ENCODE measurements at regions of chr17 and their contacts with region 1.

Region 1: DNA sequence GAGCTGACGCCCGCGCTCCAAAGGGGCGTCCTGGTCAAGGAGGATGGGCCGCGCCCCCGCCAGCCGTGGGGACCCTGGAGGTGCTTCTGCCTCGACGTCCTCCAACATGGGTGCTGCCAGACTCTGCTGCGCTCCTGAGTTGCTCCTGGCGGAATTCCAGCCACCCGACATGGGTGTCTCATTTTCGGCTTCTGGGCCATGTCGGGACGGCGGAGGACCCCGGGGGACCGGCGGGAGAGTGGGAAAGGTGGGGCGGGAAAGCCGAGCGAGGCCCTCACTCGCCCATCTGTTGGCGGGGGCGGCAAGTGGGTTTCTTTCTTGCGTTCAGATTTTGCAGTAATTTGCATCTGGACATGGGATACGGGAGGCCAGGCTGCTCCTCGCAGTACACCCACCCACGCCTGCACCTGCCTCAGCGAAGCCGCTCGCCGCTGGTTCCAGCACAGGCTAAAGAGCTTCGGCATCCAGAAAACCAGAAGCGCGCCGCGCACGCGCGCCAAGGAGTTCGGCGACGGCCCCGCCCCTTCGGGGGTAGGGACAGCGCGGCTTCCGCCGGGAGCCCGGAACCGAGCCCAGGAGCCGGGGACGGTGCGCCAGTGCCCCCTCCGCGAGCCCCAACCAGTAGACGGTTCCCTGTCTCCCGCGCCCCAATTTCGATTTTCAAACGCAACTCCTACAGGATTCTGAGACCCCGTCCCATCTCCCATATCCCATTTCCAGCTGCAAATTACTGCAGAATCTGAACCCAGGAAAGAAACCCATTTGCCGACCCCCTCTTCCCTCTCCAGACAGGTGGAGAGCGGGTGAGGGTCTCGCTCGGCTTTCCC is at the start of gene ARMC7:
- DNase-seq: peak; percentile 69 to 92
- H3K4me3 ChIP-seq: peak within 1 kb of the TSS; percentile 59
- H3K27ac ChIP-seq: peak within 1 kb of the TSS; percentile 44; the same call in 1 of the 2 replicates
- H3K4me1 ChIP-seq: peaks cover 12% of the 10 kb centered on the region; the same call in 1 of the 2 replicates
- H3K27me3 ChIP-seq: no peaks in the 10 kb centered on the region
- CTCF ChIP-seq: no peak
- total RNA-seq, gene ARMC7: 19.2 and 20.5 TPM in 2 replicates

Region 2: GRCh38 chr17:75069783-75070182 is 39.8 kb before region 1 on chr17:
- CTCF ChIA-PET with region 1: interaction called, 5 read pairs
- POLR2A ChIA-PET with region 1: interaction called, 5 read pairs
- intact Hi-C with region 1: loop called (anchors 1 kb)
- DNase-seq: no peak
- H3K4me3 ChIP-seq: no peak overlapping the region
- H3K27ac ChIP-seq: no peak overlapping the region
- H3K4me1 ChIP-seq: no peaks in the 10 kb centered on the region
- H3K27me3 ChIP-seq: no peaks in the 10 kb centered on the region
- CTCF ChIP-seq: peak; percentile 65

Region 3: DNA sequence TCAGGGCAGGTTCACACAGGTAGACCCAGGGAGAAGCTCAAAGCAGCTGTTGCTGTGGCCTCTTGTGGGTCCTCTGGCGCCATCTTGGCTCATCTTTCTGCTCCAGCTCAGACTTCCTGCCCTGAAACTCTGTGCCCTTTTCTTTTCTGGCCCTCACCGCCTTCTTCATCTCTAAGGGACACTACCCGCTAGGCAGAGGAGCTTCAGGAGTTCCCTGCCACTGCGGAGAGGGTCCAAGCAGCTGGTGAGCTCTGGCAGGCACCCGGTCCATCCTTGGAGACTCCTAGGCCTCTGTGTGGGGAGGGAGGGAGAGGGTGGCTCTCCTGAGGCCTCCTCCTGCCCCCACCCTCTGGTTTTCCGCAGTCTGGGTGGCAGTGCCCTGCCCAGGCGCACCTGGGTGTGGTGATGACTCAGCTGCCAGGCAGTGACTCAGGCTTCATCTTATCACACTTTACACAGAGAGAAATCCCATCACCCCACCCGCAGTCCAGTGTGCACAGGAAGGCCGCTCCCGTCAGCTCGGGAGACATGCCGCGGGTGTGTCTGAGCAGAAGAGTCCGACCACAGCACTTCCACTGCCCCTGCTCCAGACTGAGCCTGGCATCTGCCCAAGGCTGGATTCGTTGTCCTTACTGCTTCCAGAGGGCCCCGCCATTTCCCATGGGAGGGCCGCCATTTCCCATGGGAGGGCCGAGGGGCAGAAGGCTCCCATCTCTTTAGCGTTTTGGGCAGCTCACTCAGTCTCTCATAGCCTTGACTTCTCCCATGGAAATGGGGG is 14.6 kb after region 1 on chr17:
- CTCF ChIA-PET with region 1: interaction called, 13 read pairs
- POLR2A ChIA-PET with region 1: interaction called, 6 read pairs
- intact Hi-C with region 1: no loop called
- DNase-seq: peak; percentile 97
- H3K4me3 ChIP-seq: peak overlapping the region; percentile 45; the same call in 1 of the 2 replicates
- H3K27ac ChIP-seq: peak overlapping the region; percentile 93
- H3K4me1 ChIP-seq: peaks cover 39% of the 10 kb centered on the region
- H3K27me3 ChIP-seq: no peaks in the 10 kb centered on the region
- CTCF ChIP-seq: no peak; the same call in 1 of the 2 replicates

Region 4: DNA sequence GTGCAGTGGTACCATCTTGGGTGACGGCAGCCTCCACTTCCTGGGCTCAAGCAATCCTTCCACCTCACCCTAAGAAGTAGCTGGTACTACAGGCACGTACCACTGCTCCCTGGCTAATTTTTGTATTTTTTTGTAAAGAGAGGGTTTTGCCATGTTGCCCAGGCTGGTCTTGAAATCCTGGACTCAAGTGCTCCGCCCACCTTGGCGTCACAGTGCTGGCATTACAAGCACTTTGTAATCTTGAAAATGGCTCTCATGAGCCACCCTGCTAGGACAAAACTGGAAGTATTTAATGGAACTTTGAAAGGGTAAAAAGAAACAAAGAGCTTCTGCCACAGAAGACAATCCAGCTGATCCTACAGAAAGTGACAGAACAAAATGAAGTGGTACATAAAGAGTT is 63.9 kb after region 1 on chr17:
- CTCF ChIA-PET with region 1: interaction called, 13 read pairs
- POLR2A ChIA-PET with region 1: interaction called, 6 read pairs
- intact Hi-C with region 1: loop called (anchors 1 kb)
- DNase-seq: no peak
- H3K4me3 ChIP-seq: no peak overlapping the region
- H3K27ac ChIP-seq: peak overlapping the region; percentile 25; the same call in 1 of the 2 replicates
- H3K4me1 ChIP-seq: no peaks in the 10 kb centered on the region
- H3K27me3 ChIP-seq: no peaks in the 10 kb centered on the region
- CTCF ChIP-seq: no peak

Region 5: DNA sequence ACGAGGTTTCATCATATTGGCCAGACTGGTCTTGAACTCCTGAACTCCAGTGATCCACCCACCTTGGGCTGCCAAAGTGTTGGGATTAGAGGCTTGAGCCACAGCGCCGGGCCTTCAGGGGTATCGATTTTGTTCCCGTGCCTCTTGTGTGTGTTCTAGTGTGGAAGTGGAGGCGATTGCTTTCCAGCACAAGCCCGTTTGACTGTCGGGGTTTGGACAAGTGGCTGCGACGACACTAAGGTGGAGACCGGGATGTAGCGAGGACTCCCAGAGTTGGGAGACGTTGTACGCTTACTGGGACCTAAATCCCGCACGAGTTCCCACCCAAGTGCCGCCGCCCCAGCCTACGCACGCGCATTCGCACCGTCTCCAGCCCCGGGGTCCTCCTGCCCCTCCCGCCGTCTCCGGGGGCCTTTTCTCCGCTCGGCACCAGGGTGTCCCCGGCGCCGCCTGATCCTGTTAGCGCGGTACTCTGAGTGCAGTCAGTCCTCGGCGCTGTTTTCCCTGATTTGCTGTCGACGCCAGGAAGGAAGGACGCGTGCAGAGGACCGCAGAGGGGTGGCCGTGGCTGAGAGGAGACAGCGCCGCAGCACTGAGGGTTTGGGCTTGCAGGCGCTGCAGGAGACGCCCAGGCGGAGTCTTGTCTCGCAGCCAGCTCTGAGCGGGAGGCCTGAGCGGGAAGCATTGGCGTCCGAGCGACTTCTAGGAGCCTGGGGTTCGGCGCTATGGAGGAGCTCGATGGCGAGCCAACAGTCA is 95.6 kb after region 1 on chr17 and contains the start of gene NUP85:
- CTCF ChIA-PET with region 1: interaction called, 19 read pairs
- POLR2A ChIA-PET with region 1: interaction called, 8 read pairs
- intact Hi-C with region 1: loop called (anchors 1 kb)
- DNase-seq: peak; percentile 90 to 96
- H3K4me3 ChIP-seq: peak within 1 kb of the TSS; percentile 93
- H3K27ac ChIP-seq: peak within 1 kb of the TSS; percentile 92
- H3K4me1 ChIP-seq: peaks cover 14% of the 10 kb centered on the region
- H3K27me3 ChIP-seq: no peaks in the 10 kb centered on the region
- CTCF ChIP-seq: no peak
- total RNA-seq, gene NUP85: 64.2 and 73.1 TPM in 2 replicates

Measured in PC-9 (cell line).